Left ventricle myocardium superior (tissue), 1 donor: ENCODE measurements at regions of chr9 and their contacts with region 1.

Region 1: GRCh38 chr9:5195453-5195852 is 10.0 kb upstream of the INSL6 start:
- DNase-seq: no peak
- ATAC-seq: no peak

Region 2: DNA sequence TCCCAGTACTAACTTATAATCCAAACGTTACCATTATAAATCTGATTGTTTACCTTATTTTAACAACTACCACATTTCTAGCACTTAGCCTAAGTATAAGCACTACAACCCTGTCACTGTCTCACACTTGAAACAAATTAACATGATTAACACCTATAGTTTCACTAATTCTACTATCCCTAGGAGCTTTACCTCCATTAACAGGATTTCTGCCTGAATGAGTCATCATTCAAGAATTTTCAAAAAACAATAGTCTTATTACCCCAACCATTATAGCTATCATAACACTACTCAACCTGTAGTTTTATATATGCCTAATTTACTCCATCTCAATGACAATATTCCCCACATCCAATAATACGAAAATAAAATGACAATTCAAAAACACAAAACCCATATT is 99.7 kb before region 1 on chr9:
- intact Hi-C with region 1: no loop called
- DNase-seq: no peak
- ATAC-seq: no peak

Region 3: DNA sequence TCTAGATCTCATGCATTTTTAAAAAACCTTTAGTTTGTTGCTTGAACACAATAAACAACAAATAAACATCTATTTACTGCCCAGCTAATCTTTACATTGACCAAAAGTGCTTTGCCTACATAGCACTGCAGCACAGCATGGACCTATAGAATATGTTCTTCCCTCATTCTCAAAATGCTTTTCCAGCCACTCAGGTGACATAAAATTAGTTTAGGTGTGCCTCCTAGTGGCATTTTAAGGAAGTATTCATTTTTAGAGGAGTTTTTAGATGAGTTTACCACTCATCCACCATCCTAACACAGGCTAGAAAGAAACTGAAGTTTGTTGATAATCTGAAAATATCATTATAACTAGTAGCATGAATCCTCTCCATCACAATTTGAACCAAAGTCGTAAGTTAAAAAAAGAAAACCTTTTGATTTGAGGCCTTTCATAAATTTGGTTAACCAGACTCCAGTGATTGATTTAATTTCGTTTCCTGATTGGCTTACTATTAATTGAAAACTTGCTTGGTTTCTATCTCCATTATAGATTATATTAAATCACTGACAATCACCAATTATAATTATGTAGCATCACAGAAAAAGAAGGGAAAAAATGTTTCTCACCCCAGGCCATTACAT is 229.7 kb after region 1 on chr9:
- intact Hi-C with region 1: loop called (anchors 10 kb)
- DNase-seq: no peak
- ATAC-seq: no peak